Dendritic cell treated with granulocyte-macrophage colony-stimulating factor and Interleukin-4, amounts not matched to agents 40 ng/mL and 50 ng/mL, for 4 days (primary cell): ENCODE measurements at regions of chr19 and their contacts with region 1.

Region 1: DNA sequence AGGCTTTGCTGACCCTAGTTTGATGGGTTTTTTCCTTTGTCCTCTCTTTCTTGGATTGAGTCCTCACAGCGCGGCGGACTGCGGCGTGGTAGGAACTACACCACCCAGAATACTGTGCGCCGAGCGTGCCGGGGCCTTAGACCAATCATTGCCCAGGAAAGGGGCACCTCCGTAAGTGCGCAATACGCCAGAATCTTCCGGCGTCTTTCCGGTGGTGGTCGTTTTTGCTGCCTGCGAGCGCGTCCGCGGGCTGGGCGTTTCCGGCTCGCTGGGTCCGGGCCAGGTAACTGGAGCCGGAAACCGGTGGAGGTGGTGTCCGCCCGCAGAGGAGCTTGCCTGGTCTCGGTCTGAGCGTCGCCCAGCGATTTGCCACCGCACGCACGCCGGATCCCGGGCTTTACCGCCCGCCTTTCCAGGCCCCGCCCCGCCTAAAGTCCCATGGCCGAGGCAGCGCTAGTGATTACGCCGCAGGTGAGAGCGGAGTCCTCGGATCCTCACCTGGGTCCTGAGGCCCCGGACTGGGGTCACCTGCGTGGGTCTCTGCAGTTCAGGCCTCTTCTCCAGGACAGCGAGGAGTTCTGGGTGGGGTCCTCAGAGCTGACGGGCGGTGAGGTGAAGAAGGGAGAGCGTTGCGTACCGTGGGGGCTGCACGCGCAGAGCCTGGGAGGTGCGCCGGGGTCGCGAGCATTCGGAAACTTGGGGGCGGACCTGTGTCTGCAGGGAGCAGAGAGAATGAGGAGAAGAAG is at the start of gene ZNF549:
- H3K4me3 Mint-ChIP-seq: peak within 1 kb of the TSS; percentile 86
- H3K27ac Mint-ChIP-seq: peak within 1 kb of the TSS; percentile 86
- H3K4me1 Mint-ChIP-seq: peaks cover 13% of the 10 kb centered on the region
- H3K27me3 Mint-ChIP-seq: peaks cover 1% of the 10 kb centered on the region

Region 2: GRCh38 chr19:57435062-57435978 is 92.0 kb before region 1 on chr19 and contains the start of gene ZNF749:
- intact Hi-C with region 1: no loop called
- H3K4me3 Mint-ChIP-seq: peak within 1 kb of the TSS; percentile 83
- H3K27ac Mint-ChIP-seq: peak within 1 kb of the TSS; percentile 76
- H3K4me1 Mint-ChIP-seq: peaks cover 21% of the 10 kb centered on the region
- H3K27me3 Mint-ChIP-seq: no peaks in the 10 kb centered on the region

Region 3: GRCh38 chr19:57546513-57546912 is 19.2 kb after region 1 on chr19:
- intact Hi-C with region 1: no loop called
- H3K4me3 Mint-ChIP-seq: no peak overlapping the region
- H3K27ac Mint-ChIP-seq: no peak overlapping the region
- H3K4me1 Mint-ChIP-seq: no peaks in the 10 kb centered on the region
- H3K27me3 Mint-ChIP-seq: no peaks in the 10 kb centered on the region

Region 4: GRCh38 chr19:57559404-57560025 is 32.2 kb after region 1 on chr19 and contains the start of gene ZNF550:
- intact Hi-C with region 1: loop called (anchors 2 kb)
- H3K4me3 Mint-ChIP-seq: peak within 1 kb of the TSS; percentile 92
- H3K27ac Mint-ChIP-seq: peak within 1 kb of the TSS; percentile 91
- H3K4me1 Mint-ChIP-seq: peaks cover 23% of the 10 kb centered on the region
- H3K27me3 Mint-ChIP-seq: peaks cover 13% of the 10 kb centered on the region

Region 5: DNA sequence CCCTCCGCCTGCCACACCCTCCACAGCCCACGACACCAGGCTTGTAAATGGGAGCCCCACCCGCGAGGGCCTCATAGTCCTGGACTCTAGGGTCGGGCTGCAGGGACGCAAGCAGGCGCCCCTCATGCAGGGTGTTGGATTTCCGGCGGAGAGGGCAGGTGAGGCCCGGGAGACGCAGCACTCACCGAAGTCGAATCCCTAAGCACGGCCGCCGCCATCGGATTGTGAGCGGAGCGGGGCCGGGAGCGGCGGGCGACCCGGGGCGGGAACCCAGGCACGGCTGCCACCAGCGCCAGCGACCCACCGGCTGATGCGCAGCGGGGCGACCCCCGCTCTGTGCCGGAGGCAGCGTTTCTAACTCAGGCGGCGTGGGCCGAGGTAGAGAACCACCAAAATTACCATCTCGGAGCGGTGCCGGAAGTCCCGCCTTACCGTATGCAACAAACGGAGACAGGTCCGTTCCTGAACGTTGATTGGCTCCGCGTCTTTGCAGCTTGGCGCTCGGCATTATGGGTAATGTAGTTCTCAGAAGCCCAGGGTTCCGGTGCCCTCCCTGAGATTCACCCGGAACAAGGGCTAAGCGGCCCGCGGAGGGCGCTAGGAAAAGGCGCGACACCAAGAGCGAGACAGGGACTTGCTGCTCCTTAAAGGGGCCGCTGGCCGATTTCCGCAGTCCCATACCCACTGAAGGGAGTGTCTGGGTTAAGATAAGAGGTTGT is 51.3 kb after region 1 on chr19 and contains the start of gene ZNF416:
- intact Hi-C with region 1: loop called (anchors 2 kb)
- H3K4me3 Mint-ChIP-seq: peak within 1 kb of the TSS; percentile 82
- H3K27ac Mint-ChIP-seq: peak within 1 kb of the TSS; percentile 74
- H3K4me1 Mint-ChIP-seq: peaks cover 22% of the 10 kb centered on the region
- H3K27me3 Mint-ChIP-seq: no peaks in the 10 kb centered on the region

Region 6: GRCh38 chr19:57613941-57614743 is 86.8 kb after region 1 on chr19 and contains the start of gene ZNF134:
- intact Hi-C with region 1: no loop called
- H3K4me3 Mint-ChIP-seq: peak within 1 kb of the TSS; percentile 93
- H3K27ac Mint-ChIP-seq: peak within 1 kb of the TSS; percentile 78
- H3K4me1 Mint-ChIP-seq: peaks cover 36% of the 10 kb centered on the region
- H3K27me3 Mint-ChIP-seq: peaks cover 2% of the 10 kb centered on the region